Naive thymus-derived CD4-positive, alpha-beta T cell (primary cell): ENCODE measurements at regions of chr2 and their contacts with region 1.

Region 1: DNA sequence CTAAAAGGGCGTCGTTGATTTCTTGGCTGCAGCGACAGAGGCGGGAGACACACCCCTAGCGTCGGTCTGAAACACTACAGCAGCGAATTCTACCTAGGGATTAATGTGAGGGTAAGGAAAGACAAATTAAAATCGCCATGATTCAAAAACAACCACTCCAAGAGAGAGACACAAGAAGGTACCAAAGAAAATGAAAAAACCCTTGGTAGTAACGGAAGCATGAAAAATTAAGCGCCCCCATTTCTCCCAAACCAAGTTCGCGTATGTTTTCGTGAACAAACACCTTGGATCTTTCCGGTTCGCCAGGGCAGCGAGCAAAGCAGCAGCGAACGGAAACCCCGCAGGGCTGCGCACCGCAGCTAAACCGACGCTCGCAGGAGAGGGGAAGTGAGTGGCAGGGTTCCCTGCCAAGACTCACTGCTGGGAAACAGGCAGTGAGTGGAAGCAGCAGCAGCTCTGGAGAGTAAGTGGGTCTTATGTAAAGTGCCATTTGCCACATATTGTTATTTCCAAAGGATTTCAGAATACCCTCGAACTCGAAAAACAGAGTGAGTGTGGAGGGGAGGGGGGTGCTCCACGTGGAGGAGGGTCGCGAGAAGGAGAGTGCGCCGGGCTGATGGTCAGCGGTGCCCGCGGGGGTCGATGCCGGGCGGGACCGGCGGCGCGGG is 1.0 kb downstream of the PPP3R1 start:
- DNase-seq: peak; percentile 46 to 91 (median 82)
- ATAC-seq: peak; percentile 75
- H3K4me3 ChIP-seq: peak overlapping the region; percentile 66
- H3K4me3 Mint-ChIP-seq: peak overlapping the region in 6 of 10 donors; percentile 88 to 99 (median 91)
- H3K27ac ChIP-seq: peak overlapping the region; percentile 82
- H3K27ac Mint-ChIP-seq: peak overlapping the region in 7 of 9 donors; percentile 92 to 99 (median 94)
- H3K4me1 ChIP-seq: peaks cover 44 to 55% of the 10 kb centered on the region in 2 donors
- H3K4me1 Mint-ChIP-seq: peaks cover 35 to 44% (median 42%) of the 10 kb centered on the region in 7 donors
- H3K27me3 ChIP-seq: no peaks in the 10 kb centered on the region
- H3K27me3 Mint-ChIP-seq: peaks cover 0 to 2% (median 0%) of the 10 kb centered on the region in 5 donors

Region 2: GRCh38 chr2:68121873-68122679 is 129.2 kb before region 1 on chr2:
- CTCF ChIA-PET with region 1: interaction called, 8 read pairs
- POLR2A ChIA-PET with region 1: interaction called, 3 read pairs
- intact Hi-C with region 1: loop called in 1 of 2 experiments (anchors 1 kb)
- DNase-seq: peak; percentile 46 to 76 (median 58)
- ATAC-seq: peak; percentile 78
- H3K4me3 ChIP-seq: no peak overlapping the region
- H3K4me3 Mint-ChIP-seq: peak overlapping the region in 3 of 10 donors; percentile 31 to 69 (median 47)
- H3K27ac ChIP-seq: no peak overlapping the region
- H3K27ac Mint-ChIP-seq: peak overlapping the region in 2 of 9 donors; percentile 31 to 57
- H3K4me1 ChIP-seq: no peaks in the 10 kb centered on the region
- H3K4me1 Mint-ChIP-seq: peaks cover 0 to 20% (median 5%) of the 10 kb centered on the region in 7 donors
- H3K27me3 ChIP-seq: no peaks in the 10 kb centered on the region
- H3K27me3 Mint-ChIP-seq: peaks cover 0 to 6% (median 0%) of the 10 kb centered on the region in 5 donors

Region 3: GRCh38 chr2:68203587-68203986 is 47.7 kb before region 1 on chr2:
- CTCF ChIA-PET with region 1: interaction called, 3 read pairs
- POLR2A ChIA-PET with region 1: no interaction called
- intact Hi-C with region 1: loop called (anchors 1 to 2 kb)
- DNase-seq: peak in 3 of 9 donors; percentile 8 to 19 (median 16)
- ATAC-seq: peak; percentile 60
- H3K4me3 ChIP-seq: no peak overlapping the region
- H3K4me3 Mint-ChIP-seq: peak overlapping the region in 9 of 10 donors; percentile 56 to 83 (median 72)
- H3K27ac ChIP-seq: peak overlapping the region; percentile 38
- H3K27ac Mint-ChIP-seq: peak overlapping the region; percentile 53 to 90 (median 83)
- H3K4me1 ChIP-seq: peaks cover 28 to 35% of the 10 kb centered on the region in 2 donors
- H3K4me1 Mint-ChIP-seq: peaks cover 53 to 94% (median 81%) of the 10 kb centered on the region in 7 donors
- H3K27me3 ChIP-seq: no peaks in the 10 kb centered on the region
- H3K27me3 Mint-ChIP-seq: no peaks in the 10 kb centered on the region

Region 4: DNA sequence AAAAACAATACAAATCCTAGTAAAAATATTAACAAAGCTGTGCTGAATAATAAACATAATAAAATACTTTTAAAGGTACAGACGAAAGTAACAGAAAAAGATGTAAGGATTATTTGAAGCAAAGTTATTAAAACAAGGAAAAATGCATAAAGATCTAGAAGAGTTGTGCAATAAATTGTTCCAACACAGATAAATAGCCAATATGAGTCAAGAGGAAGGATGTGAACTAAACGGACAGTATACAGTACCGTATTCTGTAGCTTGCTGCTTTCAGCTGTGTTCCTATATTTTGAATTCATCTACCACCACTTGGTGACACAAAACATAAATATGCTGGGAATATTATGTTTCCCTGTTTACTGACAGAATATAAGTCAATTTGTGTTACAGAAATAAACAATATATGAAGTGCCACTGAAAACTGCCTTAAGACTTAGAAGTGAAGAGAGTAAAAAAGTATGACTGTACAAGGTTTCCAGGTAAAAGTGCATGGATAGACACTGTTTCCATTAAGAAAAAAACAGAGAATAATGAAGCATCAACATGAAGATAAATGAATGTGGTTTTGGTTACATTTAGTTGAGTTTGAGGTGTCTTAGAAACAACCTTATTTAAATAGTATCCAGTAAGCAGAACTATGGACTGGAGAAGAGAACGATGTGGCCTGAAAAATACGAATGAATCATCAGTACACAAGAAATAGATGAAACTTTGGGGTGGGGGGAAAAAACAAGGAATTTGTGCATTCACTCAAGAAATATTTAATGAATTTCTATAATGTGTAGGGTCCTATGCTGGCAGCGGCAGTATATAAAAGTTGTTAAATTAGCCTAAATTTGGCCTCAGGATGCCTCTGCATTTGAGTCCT is 12.1 kb before region 1 on chr2:
- CTCF ChIA-PET with region 1: no interaction called
- POLR2A ChIA-PET with region 1: interaction called, 8 read pairs
- intact Hi-C with region 1: loop called (anchors 1 kb)
- DNase-seq: no peak
- ATAC-seq: peak; percentile 64
- H3K4me3 ChIP-seq: no peak overlapping the region
- H3K4me3 Mint-ChIP-seq: peak overlapping the region in 9 of 10 donors; percentile 2 to 76 (median 50)
- H3K27ac ChIP-seq: peak overlapping the region; percentile 15
- H3K27ac Mint-ChIP-seq: peak overlapping the region in 8 of 9 donors; percentile 5 to 94 (median 46)
- H3K4me1 ChIP-seq: peaks cover 65 to 67% of the 10 kb centered on the region in 2 donors
- H3K4me1 Mint-ChIP-seq: peaks cover 24 to 86% (median 61%) of the 10 kb centered on the region in 7 donors
- H3K27me3 ChIP-seq: no peaks in the 10 kb centered on the region
- H3K27me3 Mint-ChIP-seq: no peaks in the 10 kb centered on the region

Region 5: DNA sequence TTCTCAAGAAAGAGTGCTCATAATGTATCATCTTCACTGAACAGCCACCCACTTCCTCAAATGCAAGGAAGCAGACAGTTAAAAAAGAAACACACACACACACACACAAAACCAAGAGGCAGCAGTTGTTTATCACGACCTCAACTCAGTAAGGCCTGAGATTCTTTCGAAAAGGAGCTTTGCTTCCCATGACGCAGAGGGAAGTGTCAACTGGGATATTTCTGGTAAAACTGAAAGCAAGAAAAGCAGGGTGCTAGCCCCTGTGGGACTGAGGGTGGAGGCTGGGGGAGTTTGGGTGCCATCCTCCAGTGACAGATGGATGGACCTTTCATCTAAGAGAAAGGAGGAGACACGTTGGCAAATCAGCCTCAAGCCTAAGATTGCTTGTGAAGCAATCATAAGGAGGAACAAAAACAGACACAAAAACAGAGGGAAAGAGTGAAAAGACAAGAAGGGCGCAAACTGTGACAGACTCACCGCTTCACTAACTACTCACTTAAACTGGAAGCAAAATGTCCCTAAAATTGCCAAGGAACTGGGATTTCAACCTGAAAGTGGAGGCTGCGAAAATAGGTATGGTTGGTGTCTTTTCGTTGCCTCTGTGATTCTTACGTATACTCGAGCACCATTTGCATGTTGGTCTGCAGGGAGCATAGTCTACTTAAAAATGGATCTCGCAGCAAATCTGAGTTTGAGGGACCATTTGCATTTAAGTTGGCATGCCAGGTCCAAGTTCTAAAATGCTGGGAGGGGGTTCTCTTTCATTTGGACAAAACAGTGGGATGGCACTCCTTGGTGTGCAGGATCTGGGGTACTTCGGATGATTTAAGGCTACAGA is 483.6 kb after region 1 on chr2 and contains the start of gene ARHGAP25:
- CTCF ChIA-PET with region 1: no interaction called
- POLR2A ChIA-PET with region 1: no interaction called
- intact Hi-C with region 1: loop called (anchors 5 to 10 kb)
- DNase-seq: peak; percentile 20 to 81 (median 69)
- ATAC-seq: peak; percentile 78
- H3K4me3 ChIP-seq: peak within 1 kb of the TSS; percentile 77
- H3K4me3 Mint-ChIP-seq: no peak within 1 kb of the TSS
- H3K27ac ChIP-seq: peak within 1 kb of the TSS; percentile 78
- H3K27ac Mint-ChIP-seq: no peak within 1 kb of the TSS
- H3K4me1 ChIP-seq: peaks cover 38 to 48% of the 10 kb centered on the region in 2 donors
- H3K4me1 Mint-ChIP-seq: peaks cover 23 to 37% (median 32%) of the 10 kb centered on the region in 7 donors
- H3K27me3 ChIP-seq: no peaks in the 10 kb centered on the region
- H3K27me3 Mint-ChIP-seq: no peaks in the 10 kb centered on the region
- total RNA-seq, gene ARHGAP25: 68.2 to 139 (median 116) TPM